WTC11 (cell line): ENCODE measurements at regions of chr16 and their contacts with region 1.

Region 1: DNA sequence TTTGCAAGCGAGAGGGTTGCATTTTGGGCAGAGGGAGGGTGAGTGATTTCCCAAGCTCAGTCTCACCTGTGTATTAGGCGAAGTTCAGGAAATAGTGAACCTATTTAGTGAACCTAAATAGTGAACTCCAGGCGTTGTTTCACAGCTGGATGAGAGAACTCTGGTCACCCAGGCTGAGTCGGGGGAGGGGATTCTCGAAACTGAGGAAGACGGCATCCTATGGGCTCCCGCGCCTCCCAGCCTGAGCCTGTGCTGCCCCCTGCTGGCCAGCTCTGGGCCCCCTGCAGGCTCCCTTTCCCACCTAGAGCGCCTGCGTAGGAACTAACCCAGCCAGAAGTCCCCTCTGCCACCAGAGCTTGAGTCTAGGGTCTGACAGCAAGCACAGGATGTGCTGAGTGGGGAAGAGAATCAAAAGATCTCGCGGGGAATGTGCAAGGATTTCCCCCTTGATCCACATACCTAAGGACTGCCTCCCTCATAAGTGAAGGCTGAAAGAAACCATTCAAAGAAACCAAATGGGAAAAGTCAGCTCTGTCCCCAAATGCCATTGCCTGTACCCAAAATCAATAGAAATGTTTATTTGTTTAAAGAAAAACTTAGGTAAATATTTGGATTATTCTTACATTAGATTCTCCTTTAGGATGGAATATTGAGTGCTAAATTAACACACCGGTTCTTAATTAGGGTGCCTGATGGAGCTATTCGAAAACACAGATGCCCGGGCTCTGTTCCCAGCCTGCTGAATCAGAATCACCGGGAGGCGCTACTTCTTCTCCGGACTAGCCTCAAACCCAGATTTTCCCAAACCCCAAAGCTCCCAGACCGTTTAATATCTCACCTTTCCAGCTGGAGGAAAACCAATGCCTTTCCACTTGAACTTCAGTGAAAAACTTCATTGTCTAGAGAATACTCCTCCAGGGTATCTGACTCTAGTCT is 14.8 kb upstream of the MARVELD3 start:
- DNase-seq: peak; percentile 93
- ATAC-seq: peak; percentile 95
- H3K4me3 Mint-ChIP-seq: peak overlapping the region; percentile 37; the same call in 1 of the 2 replicates
- H3K27ac Mint-ChIP-seq: no peak overlapping the region
- H3K4me1 Mint-ChIP-seq: peaks cover 3% of the 10 kb centered on the region; the same call in 1 of the 2 replicates
- H3K27me3 Mint-ChIP-seq: no peaks in the 10 kb centered on the region; the same call in 1 of the 2 replicates
- CTCF ChIP-seq: peak; percentile 93

Region 2: DNA sequence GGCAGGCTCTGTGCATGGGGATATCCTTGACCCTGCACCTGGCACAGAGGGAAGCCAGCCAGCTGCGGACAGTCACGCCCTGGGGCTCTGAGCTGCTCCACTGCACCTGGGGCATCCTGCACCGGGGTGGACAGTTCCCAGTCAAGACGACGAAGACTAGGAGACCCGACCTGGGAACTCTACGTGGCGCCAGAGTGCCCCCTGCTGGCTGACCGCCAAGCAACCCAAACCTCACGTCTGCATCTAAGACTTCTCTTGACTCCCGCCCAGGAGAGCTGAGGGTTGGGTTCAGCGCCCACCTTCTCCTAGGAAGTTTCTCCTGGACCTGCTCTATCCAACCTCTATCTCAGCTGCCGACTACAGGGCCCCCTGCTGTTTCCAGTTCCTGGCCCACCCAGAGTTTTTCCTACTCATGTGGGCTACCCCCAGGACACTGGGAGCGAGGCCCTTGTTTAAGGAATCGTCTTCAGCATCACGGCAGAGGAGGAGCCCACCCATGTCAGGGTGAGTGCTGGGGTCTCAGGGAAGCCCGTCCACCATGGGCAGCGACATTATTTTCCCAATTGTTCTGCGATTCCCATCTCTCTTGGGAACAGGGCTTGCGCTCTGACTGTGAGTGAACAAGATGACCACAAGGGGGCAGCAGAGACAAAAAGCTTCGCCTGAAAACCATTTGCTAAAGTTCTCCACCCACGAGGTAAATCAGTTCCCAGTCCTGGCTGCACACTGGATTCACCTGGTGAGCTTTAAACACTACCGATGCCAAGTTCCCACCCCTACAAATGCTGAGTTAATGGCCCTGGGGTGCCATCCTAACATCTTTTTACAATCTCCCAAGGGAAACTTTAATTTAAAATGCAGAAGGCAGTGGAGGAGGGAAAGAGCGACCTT is 198.7 kb before region 1 on chr16:
- CTCF ChIA-PET with region 1: interaction called, 14 read pairs
- POLR2A ChIA-PET with region 1: no interaction called
- DNase-seq: peak; percentile 87
- ATAC-seq: peak; percentile 90
- H3K4me3 Mint-ChIP-seq: peak overlapping the region; percentile 70
- H3K27ac Mint-ChIP-seq: no peak overlapping the region
- H3K4me1 Mint-ChIP-seq: peaks cover 8% of the 10 kb centered on the region
- H3K27me3 Mint-ChIP-seq: peaks cover 7% of the 10 kb centered on the region
- CTCF ChIP-seq: peak; percentile 87

Region 3: DNA sequence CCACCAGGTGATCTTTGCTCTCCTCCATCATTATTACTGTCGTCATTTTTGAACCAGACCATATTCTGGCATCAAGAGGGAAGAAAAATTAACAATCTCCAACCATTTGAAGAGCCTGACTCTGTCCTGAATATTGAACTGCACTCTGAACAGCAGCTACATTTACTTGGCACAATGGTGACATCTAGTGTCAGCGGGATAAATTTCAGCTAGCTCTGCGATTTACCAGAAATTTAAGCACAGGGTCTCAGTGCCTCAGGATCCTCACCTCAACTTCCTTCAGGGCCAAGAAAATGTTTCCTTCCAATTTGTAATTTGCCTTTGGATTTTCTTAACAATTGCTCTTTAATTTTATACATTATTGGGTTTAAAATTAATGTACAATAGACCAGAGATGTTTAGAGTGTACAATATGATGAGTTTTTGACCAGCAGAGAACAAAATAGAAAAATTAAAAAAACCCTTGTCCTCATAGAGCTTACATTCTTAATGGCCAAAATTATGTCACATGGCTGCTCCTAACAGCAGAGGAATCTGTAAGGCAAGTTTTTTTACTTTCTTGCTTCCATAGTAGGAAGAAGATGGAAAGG is 111.3 kb before region 1 on chr16:
- CTCF ChIA-PET with region 1: interaction called, 21 read pairs
- POLR2A ChIA-PET with region 1: no interaction called
- DNase-seq: peak; percentile 44
- ATAC-seq: peak; percentile 91
- H3K4me3 Mint-ChIP-seq: no peak overlapping the region
- H3K27ac Mint-ChIP-seq: no peak overlapping the region
- H3K4me1 Mint-ChIP-seq: no peaks in the 10 kb centered on the region
- H3K27me3 Mint-ChIP-seq: no peaks in the 10 kb centered on the region; the same call in none of the 2 replicates
- CTCF ChIP-seq: peak; percentile 34

Region 4: GRCh38 chr16:71552698-71553451 is 58.3 kb before region 1 on chr16:
- CTCF ChIA-PET with region 1: interaction called, 15 read pairs
- POLR2A ChIA-PET with region 1: no interaction called
- DNase-seq: no peak
- ATAC-seq: peak; percentile 51
- H3K4me3 Mint-ChIP-seq: no peak overlapping the region
- H3K27ac Mint-ChIP-seq: no peak overlapping the region
- H3K4me1 Mint-ChIP-seq: no peaks in the 10 kb centered on the region
- H3K27me3 Mint-ChIP-seq: peaks cover 52% of the 10 kb centered on the region
- CTCF ChIP-seq: no peak

Region 5: DNA sequence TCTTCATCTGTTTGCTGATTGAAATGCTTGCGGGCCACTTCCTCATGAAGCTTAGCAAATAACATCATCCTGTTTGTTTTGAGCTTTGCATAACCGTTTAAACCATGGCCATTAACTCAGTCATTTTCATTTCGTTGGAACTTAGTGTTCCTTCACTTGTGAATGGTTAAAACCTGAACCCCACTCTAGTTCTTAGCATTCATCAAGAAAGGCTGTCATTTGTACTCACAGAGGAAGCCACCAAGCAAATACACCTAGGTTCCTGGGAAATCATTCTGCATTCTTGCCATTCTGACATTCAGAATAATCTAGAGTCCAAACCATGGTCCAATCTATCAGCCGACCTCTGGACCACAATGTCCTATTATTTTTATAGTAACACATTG is 25.9 kb before region 1 on chr16:
- CTCF ChIA-PET with region 1: interaction called, 16 read pairs
- POLR2A ChIA-PET with region 1: interaction called, 3 read pairs
- DNase-seq: no peak
- ATAC-seq: no peak
- H3K4me3 Mint-ChIP-seq: no peak overlapping the region
- H3K27ac Mint-ChIP-seq: no peak overlapping the region
- H3K4me1 Mint-ChIP-seq: no peaks in the 10 kb centered on the region
- H3K27me3 Mint-ChIP-seq: peaks cover 30% of the 10 kb centered on the region
- CTCF ChIP-seq: no peak

Region 6: DNA sequence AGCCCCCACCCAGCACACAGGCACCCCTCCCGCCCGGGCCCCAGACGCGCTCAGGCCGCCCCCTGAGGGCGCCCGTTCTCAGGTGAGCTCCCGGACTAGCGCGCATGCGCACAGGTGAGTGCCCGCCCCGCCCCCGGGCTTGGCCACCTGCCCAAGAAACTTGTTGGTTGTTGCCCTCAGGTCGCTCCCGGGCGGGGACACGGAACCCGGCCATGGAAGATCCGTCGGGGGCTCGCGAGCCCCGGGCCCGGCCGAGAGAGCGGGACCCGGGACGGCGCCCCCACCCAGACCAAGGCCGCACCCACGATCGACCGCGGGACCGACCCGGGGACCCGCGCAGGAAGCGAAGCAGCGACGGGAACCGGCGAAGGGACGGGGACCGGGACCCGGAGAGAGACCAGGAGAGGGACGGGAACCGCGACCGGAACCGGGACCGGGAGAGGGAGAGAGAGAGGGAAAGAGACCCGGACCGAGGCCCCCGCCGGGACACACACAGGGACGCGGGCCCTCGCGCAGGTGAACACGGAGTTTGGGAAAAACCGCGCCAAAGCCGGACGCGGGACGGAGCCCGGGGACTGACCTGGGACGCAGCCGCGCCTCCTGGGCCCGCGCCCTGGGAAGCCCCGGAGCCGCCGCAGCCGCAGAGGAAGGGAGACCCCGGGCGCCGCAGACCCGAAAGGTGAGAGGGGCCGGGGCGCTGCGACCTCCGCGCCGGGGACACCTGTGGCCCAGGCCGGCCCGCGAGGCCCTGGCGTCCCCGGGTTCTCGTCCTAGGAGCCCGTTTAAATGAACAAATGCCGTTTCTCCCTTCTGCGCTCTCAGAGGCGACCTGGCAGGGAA is 15.0 kb after region 1 on chr16 and contains the start of gene MARVELD3:
- CTCF ChIA-PET with region 1: interaction called, 31 read pairs
- POLR2A ChIA-PET with region 1: no interaction called
- DNase-seq: peak; percentile 97
- ATAC-seq: peak; percentile 65
- H3K4me3 Mint-ChIP-seq: peak within 1 kb of the TSS; percentile 89
- H3K27ac Mint-ChIP-seq: peak within 1 kb of the TSS; percentile 76; the same call in 1 of the 2 replicates
- H3K4me1 Mint-ChIP-seq: peaks cover 24% of the 10 kb centered on the region
- H3K27me3 Mint-ChIP-seq: no peaks in the 10 kb centered on the region; the same call in 1 of the 2 replicates
- CTCF ChIP-seq: no peak
- total RNA-seq, gene MARVELD3: 29.2 to 31.0 TPM (median 30.0 TPM) in 3 replicates